ENCODE measurements at regions of chr2 and their contacts with region 1.

Region 1: DNA sequence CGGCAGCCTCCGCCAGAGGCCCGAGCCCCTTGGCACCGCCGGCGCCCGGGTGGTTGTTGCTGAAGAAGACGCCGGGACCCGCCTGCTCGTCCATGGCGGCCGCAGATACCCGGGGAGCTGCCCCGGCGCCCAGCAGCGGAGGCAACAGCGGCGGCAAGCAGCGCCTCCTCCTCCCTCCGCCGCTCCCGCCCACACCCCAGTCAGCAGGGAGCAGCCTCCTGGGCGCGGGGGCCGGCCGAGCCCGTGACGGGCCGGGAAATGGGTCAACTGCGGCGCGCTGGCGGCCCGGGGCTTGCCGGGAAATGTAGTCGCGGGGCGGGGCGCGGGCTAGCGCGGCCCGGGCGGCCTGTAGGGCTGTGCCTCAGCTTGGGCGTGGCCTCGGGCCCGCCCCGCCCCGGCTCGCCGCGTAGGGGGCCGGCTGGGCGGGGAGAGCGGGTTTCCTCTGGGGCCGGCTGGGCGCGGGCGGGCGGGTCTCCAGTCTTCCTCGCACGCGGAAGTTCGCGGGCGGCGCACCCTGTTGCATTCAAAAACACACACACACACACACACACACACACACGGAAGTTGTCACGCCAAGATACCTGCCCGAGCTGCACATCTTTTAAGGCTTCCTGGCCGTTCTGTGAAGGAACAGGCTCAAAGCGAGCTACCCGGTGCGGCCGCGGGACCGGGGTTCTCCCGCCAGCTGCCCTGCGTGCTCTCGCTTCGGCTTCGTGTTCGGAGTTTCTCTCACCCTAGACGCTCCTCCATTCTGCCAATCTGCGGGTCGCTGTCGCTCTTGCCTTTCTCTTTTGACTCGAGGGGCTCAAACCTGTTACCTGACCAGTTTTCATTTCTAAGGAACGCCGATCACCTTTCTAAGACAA is at the start of gene STRN:
- DNase-seq: peak; percentile 85 to 98
- H3K4me3 ChIP-seq: peak within 1 kb of the TSS; percentile 83
- H3K27ac ChIP-seq: peak within 1 kb of the TSS; percentile 49; the same call in 1 of the 2 replicates
- H3K4me1 ChIP-seq: peaks cover 43% of the 10 kb centered on the region
- H3K27me3 ChIP-seq: no peaks in the 10 kb centered on the region
- CTCF ChIP-seq: no peak
- total RNA-seq, gene STRN: 33.5 and 37.6 TPM in 2 replicates

Region 2: GRCh38 chr2:36889795-36890194 is 76.8 kb before region 1 on chr2:
- CTCF ChIA-PET with region 1: no interaction called
- POLR2A ChIA-PET with region 1: no interaction called
- intact Hi-C with region 1: loop called (anchors 5 kb)
- DNase-seq: peak; percentile 22 to 98
- H3K4me3 ChIP-seq: peak overlapping the region; percentile 34; the same call in 1 of the 2 replicates
- H3K27ac ChIP-seq: peak overlapping the region; percentile 68
- H3K4me1 ChIP-seq: peaks cover 12% of the 10 kb centered on the region
- H3K27me3 ChIP-seq: no peaks in the 10 kb centered on the region
- CTCF ChIP-seq: no peak

Region 3: GRCh38 chr2:36952748-36953197 is 13.8 kb before region 1 on chr2:
- CTCF ChIA-PET with region 1: no interaction called
- POLR2A ChIA-PET with region 1: no interaction called
- intact Hi-C with region 1: loop called (anchors 1 kb)
- DNase-seq: peak; percentile 38 to 97
- H3K4me3 ChIP-seq: no peak overlapping the region
- H3K27ac ChIP-seq: peak overlapping the region; percentile 88
- H3K4me1 ChIP-seq: peaks cover 36% of the 10 kb centered on the region
- H3K27me3 ChIP-seq: no peaks in the 10 kb centered on the region
- CTCF ChIP-seq: no peak

Region 4: GRCh38 chr2:37005118-37005868 is 38.7 kb after region 1 on chr2:
- CTCF ChIA-PET with region 1: no interaction called
- POLR2A ChIA-PET with region 1: interaction called, 12 read pairs
- intact Hi-C with region 1: no loop called
- DNase-seq: no peak
- H3K4me3 ChIP-seq: no peak overlapping the region
- H3K27ac ChIP-seq: no peak overlapping the region
- H3K4me1 ChIP-seq: peaks cover 16% of the 10 kb centered on the region
- H3K27me3 ChIP-seq: no peaks in the 10 kb centered on the region
- CTCF ChIP-seq: no peak

Region 5: DNA sequence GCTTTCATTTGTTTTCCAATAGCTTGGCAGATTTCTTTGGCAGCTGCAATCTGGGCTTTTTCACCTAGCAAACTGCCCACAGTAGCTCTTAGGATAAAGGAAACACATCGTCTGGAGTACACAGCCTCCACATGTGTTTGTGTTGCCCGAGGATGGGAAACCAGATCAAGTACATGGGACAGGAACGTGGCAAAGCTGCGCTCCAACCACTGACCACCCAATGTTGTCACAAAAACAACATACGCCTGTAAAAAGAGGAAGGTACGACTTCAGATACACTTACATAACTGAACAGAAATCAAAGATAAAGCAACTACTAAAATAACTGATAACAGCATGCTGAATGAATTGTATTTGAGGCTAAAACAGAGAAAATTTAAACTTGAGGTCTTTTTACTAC is 102.1 kb after region 1 on chr2:
- CTCF ChIA-PET with region 1: no interaction called
- POLR2A ChIA-PET with region 1: no interaction called
- intact Hi-C with region 1: no loop called
- DNase-seq: no peak
- H3K4me3 ChIP-seq: no peak overlapping the region
- H3K27ac ChIP-seq: no peak overlapping the region
- H3K4me1 ChIP-seq: no peaks in the 10 kb centered on the region
- H3K27me3 ChIP-seq: no peaks in the 10 kb centered on the region
- CTCF ChIP-seq: no peak